RWPE1 (cell line): ENCODE measurements at regions of chr1 and their contacts with region 1.

Region 1: DNA sequence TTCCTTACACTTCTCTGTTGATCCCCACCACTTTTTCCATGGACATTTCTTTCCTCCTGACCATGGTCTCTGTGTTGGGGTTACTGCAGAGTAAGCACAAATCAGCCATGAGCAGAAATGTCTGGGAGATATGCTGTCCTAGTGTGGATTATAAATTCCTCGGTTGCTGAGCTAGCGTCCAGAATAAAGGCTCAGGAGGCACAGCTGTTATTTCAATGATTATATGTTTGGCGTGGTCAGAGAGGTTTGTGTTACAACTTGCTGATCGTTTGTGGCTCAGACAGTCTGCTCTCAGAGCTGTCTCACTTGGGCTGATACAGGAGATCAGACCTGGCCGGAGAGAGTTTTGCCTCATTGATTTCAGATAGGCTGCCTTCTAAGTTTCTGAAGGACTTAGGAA is 37.5 kb upstream of the LAMC2 start:
- DNase-seq: peak; percentile 21
- H3K27ac ChIP-seq: peak overlapping the region; percentile 66; the same call in 1 of the 2 replicates
- CTCF ChIP-seq: no peak

Region 2: DNA sequence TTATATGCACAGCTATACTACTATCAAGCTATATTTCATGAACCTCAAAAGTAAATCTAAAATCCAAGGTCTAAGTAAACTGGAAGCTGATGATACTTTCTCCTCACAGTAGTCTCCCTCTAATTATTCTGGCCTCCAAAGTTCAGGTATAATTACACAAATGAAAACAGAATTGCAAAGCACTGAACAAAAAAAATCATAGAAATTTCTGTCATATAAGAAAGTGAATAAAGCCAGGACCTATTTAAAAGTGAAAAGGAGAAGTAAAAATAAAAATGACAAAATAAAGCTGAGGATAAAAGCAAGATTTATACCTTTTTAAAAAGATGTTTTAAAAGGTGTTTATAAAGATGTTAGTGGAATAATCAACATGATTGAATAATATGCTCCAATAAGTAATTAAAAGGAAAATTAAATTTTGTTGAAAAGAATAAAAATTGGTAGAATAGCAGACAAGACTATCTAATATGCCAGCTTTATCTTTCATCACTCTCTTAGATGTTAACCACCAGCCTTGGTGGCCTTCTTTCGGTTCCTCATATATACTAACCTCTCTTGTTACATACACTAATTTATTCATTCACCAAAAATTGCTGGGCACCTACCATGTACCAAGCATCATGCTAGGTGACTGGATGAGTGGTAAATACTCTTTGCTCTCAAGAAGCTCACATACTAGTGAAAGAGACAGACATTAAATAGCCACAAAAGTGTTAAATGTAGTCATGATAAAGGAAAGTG is 220.7 kb before region 1 on chr1:
- CTCF ChIA-PET with region 1: no interaction called
- POLR2A ChIA-PET with region 1: no interaction called
- DNase-seq: no peak
- H3K27ac ChIP-seq: no peak overlapping the region
- CTCF ChIP-seq: no peak

Region 3: DNA sequence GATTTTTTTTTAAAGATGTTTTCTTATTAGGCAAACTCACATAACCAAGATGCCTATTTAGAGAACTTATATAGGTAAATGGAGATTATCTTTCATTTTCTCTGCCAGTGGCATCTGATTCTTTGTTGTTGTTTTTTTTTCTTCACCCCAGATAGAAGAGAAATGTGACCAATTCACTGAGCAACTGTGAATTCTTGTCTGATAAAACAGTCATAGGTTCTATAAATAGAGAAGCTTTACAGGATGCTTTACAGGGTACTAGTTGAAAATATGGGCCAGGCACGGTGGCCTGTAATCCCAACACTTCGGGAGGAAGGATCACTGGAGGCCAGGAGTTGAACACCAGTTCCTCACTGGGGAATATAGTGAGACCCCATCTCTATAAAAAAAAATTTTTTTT is 13.3 kb before region 1 on chr1:
- CTCF ChIA-PET with region 1: no interaction called
- POLR2A ChIA-PET with region 1: interaction called, 15 read pairs
- DNase-seq: no peak
- H3K27ac ChIP-seq: no peak overlapping the region
- CTCF ChIP-seq: no peak